Right ventricle myocardium inferior (tissue), 1 donor: ENCODE measurements at regions of chr1 and their contacts with region 1.

Region 1: GRCh38 chr1:181033799-181034451 is at the start of gene MR1:
- DNase-seq: no peak
- ATAC-seq: peak; percentile 94
- total RNA-seq, gene MR1: 5.3 TPM

Region 2: DNA sequence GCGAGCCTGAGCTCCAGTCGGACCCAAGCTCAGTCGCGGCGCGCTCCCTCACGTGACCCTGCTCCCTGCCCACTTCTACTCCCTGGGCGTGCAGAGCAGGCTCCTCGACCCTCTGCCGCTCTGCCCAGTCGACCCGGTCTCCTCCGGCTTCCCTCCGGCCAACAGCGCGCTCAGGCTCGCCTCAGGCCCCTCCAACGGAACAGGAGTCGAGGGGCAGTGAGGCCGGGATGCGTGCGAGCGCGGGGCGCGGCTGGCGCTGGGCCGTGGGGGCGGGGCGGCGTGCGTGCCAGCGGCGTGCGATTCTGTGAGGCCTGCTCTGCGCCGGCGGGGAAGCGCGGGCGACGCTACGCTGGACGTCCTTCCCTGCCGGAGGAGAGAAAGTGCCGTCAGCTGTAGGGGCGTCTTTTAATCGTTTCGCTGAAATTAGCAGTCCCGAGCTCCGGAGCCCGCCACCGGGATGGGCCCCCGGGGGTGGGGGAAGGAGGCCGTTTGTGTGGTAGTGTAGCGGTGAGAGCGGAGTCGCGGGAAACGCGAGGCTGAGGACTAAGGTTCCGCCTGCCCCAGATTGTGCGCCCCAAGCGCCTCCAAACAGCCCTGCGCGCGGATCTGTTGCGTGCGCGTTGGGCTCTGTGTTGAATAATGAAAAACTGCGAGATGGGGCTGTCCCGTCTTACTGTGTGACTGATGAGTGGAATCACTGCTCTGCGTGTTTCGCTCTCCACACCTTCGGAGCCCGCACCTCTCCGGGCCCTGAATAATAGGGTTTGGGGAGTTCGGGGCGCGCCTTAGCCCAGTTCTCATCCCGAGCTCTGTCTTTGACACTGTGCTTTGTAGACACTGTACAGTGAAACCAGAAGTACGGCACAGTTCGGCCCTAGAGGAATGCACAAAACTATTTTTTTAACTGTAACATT is 531.3 kb before region 1 on chr1 and contains the start of gene ACBD6:
- intact Hi-C with region 1: loop called (anchors 10 kb)
- DNase-seq: peak; percentile 93
- ATAC-seq: peak; percentile 95
- total RNA-seq, gene ACBD6: 17.8 TPM

Region 3: GRCh38 chr1:180863158-180863775 is 170.7 kb before region 1 on chr1:
- intact Hi-C with region 1: no loop called
- DNase-seq: no peak
- ATAC-seq: no peak

Region 4: DNA sequence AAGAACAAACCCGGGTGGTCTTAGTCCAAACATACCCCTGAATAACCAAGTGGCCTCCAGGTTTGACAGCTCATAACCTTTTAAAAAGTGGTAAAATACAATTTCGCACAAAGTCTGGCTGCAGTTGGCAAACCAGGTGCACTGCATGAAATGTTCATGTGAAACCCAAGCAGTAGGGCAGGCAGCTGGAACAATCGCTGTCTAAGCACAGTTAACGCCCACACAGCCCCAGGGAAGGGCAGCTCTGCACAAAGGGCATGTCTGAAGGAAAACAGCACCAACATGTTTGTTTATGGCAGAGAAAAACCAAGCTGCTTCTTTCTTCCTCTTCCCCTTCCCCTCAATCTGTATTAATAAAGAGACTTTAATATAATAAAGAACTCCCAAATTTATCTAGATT is 71.7 kb before region 1 on chr1:
- intact Hi-C with region 1: no loop called
- DNase-seq: no peak
- ATAC-seq: no peak

Region 5: GRCh38 chr1:181088079-181089016 is 54.4 kb after region 1 on chr1 and contains the start of gene IER5:
- intact Hi-C with region 1: loop called (anchors 5 kb)
- DNase-seq: peak; percentile 98
- ATAC-seq: peak; percentile 95
- total RNA-seq, gene IER5: 14.3 TPM

Region 6: GRCh38 chr1:181105134-181106021 is 71.5 kb after region 1 on chr1:
- intact Hi-C with region 1: loop called (anchors 1 kb)
- DNase-seq: peak; percentile 99
- ATAC-seq: peak; percentile 98

Region 7: GRCh38 chr1:181166377-181167196 is 132.7 kb after region 1 on chr1:
- intact Hi-C with region 1: loop called (anchors 2 kb)
- DNase-seq: no peak
- ATAC-seq: peak; percentile 97